ENCODE measurements at regions of chr19 and their contacts with region 1.

Region 1: DNA sequence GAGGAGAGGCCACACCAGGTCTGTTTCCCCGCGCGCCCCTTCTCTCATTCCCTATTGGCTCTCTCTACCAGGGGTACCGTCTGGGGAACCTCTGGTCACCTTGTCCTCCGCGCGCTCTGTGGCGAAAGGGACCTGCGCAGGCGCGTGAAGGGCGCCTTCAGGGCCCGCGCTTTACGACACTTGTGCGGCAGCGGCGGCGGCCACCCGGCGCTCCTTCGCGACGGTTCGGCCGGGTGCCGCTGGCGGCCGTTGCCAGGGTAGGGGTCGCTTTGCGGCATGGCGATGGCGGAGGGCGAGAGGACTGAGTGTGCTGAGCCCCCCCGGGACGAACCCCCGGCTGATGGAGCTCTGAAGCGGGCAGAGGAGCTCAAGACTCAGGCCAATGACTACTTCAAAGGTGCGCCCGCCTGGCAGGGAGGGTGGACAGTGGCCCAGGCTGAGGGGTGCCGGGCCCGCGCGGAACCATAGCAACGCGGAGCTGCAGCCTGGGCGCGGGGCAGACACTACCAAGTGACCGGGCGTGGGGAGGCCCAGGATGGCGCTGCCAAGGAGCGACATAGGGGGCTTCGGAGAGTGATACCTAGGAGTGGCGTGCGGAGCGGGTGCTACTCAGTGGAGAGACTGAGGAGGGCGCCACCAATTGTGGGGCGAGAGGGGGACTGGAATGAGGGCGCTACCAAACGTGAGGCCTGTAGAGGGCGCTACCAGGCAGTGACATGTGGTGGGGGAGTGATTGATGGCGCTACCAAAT is at the start of gene PPP5C:
- DNase-seq: peak; percentile 67 to 95 (median 88)

Region 2: GRCh38 chr19:46299004-46299509 is 47.9 kb before region 1 on chr19:
- intact Hi-C with region 1: loop called (anchors 5 kb)
- DNase-seq: peak; percentile 81 to 97 (median 92)